Left cardiac atrium (tissue), 4 donors: ENCODE measurements at regions of chr11 and their contacts with region 1.

Region 1: GRCh38 chr11:87037450-87038234 is at the start of gene TMEM135:
- DNase-seq: peak; percentile 95
- ATAC-seq: peak; percentile 98 to 99
- total RNA-seq, gene TMEM135: 23.1 to 30.8 TPM

Region 2: DNA sequence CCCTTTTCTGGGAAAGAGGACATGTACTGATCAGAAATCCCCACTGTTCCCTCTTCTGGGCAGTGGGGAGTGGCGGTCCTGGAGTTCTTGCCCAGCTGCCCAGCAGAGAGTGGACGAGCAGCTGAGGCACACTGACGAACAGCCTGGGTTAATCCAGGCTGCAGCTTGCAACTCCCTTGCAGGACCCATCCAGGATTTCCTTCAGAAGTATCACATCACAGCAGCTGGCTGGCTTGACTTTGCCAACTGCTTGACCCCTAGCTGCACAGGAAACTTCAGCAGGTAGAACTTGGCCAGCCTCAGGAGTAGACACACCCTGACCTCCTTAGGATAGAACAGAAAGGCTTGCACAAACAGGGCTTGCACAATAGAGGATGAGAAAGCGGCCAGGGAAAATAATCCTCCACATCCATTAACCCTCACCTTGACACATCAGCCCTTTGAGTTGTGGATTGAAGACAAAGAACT is 54.6 kb before region 1 on chr11:
- intact Hi-C with region 1: loop called in 1 of 2 experiments (anchors 10 kb)
- DNase-seq: peak; percentile 62
- ATAC-seq: peak; percentile 49 to 92